IMR-90 (cell line): ENCODE measurements at regions of chr3 and their contacts with region 1.

Region 1: GRCh38 chr3:138935848-138936740 is 10.8 kb downstream of the FOXL2 start:
- DNase-seq: peak; percentile 29
- ATAC-seq: peak; percentile 93
- H3K4me3 ChIP-seq: peak overlapping the region; percentile 41
- H3K27ac ChIP-seq: no peak overlapping the region
- H3K4me1 ChIP-seq: peaks cover 4% of the 10 kb centered on the region; the same call in 1 of the 2 replicates
- H3K27me3 ChIP-seq: peaks cover 79% of the 10 kb centered on the region
- CTCF ChIP-seq: peak; percentile 74
- POLR2A ChIP-seq: no peak
- RAD21 ChIP-seq: peak; percentile 55

Region 2: GRCh38 chr3:138974462-138974861 is 38.4 kb after region 1 on chr3:
- CTCF ChIA-PET with region 1: interaction called, 3 read pairs
- POLR2A ChIA-PET with region 1: no interaction called
- dilution Hi-C with region 1: no loop called
- in situ Hi-C with region 1: no loop called
- intact Hi-C with region 1: loop called (anchors 1 kb)
- DNase-seq: peak; percentile 13
- ATAC-seq: no peak
- H3K4me3 ChIP-seq: no peak overlapping the region
- H3K27ac ChIP-seq: no peak overlapping the region
- H3K4me1 ChIP-seq: no peaks in the 10 kb centered on the region
- H3K27me3 ChIP-seq: peaks cover 1% of the 10 kb centered on the region
- CTCF ChIP-seq: no peak
- POLR2A ChIP-seq: no peak
- RAD21 ChIP-seq: no peak

Region 3: GRCh38 chr3:139111392-139112229 is 175.5 kb after region 1 on chr3:
- CTCF ChIA-PET with region 1: interaction called, 4 read pairs
- POLR2A ChIA-PET with region 1: no interaction called
- dilution Hi-C with region 1: no loop called
- in situ Hi-C with region 1: loop called (anchors 10 kb)
- intact Hi-C with region 1: loop called (anchors 5 kb)
- DNase-seq: peak; percentile 55
- ATAC-seq: peak; percentile 93
- H3K4me3 ChIP-seq: no peak overlapping the region
- H3K27ac ChIP-seq: no peak overlapping the region
- H3K4me1 ChIP-seq: no peaks in the 10 kb centered on the region
- H3K27me3 ChIP-seq: peaks cover 34% of the 10 kb centered on the region
- CTCF ChIP-seq: peak; percentile 80
- POLR2A ChIP-seq: no peak
- RAD21 ChIP-seq: peak; percentile 75

Region 4: DNA sequence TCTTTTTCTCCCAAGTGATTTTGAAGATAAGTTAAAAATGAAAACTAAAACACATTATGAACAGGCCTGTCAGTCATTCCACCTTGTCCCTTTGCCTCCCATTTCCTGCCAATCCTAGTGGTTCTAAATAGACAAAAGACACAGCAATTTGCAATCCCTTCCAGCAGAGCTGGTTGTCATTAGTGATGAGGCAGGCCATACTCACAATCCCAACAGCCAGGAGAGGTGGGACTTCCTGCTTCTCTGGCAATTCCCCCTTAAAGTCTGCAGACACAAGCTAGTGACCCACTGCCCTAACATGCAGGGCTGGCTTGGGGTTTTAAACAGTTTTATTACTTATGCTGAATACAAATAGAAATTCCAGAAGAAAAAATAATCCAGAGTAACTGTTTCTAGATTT is 641.8 kb after region 1 on chr3:
- CTCF ChIA-PET with region 1: no interaction called
- POLR2A ChIA-PET with region 1: no interaction called
- dilution Hi-C with region 1: no loop called
- in situ Hi-C with region 1: no loop called
- intact Hi-C with region 1: no loop called
- DNase-seq: no peak
- ATAC-seq: no peak
- H3K4me3 ChIP-seq: no peak overlapping the region
- H3K27ac ChIP-seq: no peak overlapping the region
- H3K4me1 ChIP-seq: no peaks in the 10 kb centered on the region
- H3K27me3 ChIP-seq: no peaks in the 10 kb centered on the region
- CTCF ChIP-seq: no peak
- POLR2A ChIP-seq: no peak
- RAD21 ChIP-seq: no peak